ENCODE measurements at regions of chr10 and their contacts with region 1.

Region 1: GRCh38 chr10:110698782-110699201 is 54.7 kb downstream of the RBM20 start:
- DNase-seq: no peak
- H3K4me3 ChIP-seq: no peak overlapping the region
- H3K27ac ChIP-seq: peak overlapping the region in 3 of 4 donors; percentile 19 to 53 (median 22)
- H3K4me1 ChIP-seq: no peaks in the 10 kb centered on the region
- H3K27me3 ChIP-seq: no peaks in the 10 kb centered on the region
- CTCF ChIP-seq: no peak
- EP300 ChIP-seq: no peak
- POLR2A ChIP-seq: no peak

Region 2: DNA sequence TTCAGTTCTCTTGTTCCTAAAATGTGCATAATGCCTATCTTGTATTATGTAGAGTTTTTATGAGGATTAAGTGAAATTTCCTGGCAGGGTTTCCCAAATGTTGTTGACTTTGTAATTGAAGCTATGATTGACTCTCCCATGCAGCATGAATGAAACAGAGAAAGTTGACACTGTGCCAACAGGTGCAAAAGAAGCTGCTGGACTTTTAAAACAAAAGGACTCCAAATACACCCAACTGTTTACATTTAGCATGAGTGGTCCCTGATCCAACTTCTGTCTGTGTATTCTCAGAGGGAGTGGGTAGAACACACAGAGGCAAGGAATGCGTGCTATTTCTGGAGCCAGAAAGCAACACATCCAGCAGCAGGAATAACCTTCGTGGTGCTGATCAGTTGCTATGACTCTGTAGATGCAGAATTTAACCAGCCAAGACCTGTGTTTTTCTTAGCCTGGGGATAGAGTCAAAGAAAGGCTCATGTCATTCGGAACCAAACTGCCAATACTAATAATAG is 69.1 kb before region 1 on chr10:
- in situ Hi-C with region 1: no loop called
- intact Hi-C with region 1: loop called (anchors 1 kb)
- DNase-seq: no peak
- H3K4me3 ChIP-seq: no peak overlapping the region
- H3K27ac ChIP-seq: peak overlapping the region in 3 of 4 donors; percentile 38 to 60 (median 48)
- H3K4me1 ChIP-seq: peaks cover 0 to 9% (median 7%) of the 10 kb centered on the region in 4 donors
- H3K27me3 ChIP-seq: no peaks in the 10 kb centered on the region
- CTCF ChIP-seq: no peak
- EP300 ChIP-seq: no peak
- POLR2A ChIP-seq: no peak

Region 3: GRCh38 chr10:110774069-110775019 is 75.6 kb after region 1 on chr10:
- in situ Hi-C with region 1: no loop called
- intact Hi-C with region 1: no loop called
- DNase-seq: no peak
- H3K4me3 ChIP-seq: no peak overlapping the region
- H3K27ac ChIP-seq: peak overlapping the region; percentile 81 to 87 (median 85)
- H3K4me1 ChIP-seq: peaks cover 16 to 48% (median 23%) of the 10 kb centered on the region in 4 donors
- H3K27me3 ChIP-seq: no peaks in the 10 kb centered on the region
- CTCF ChIP-seq: no peak
- EP300 ChIP-seq: peak; percentile 68
- POLR2A ChIP-seq: no peak

Measured in transverse colon (tissue), 4 donors.